HCT116 (cell line): ENCODE measurements at regions of chr11 and their contacts with region 1.

Region 1: DNA sequence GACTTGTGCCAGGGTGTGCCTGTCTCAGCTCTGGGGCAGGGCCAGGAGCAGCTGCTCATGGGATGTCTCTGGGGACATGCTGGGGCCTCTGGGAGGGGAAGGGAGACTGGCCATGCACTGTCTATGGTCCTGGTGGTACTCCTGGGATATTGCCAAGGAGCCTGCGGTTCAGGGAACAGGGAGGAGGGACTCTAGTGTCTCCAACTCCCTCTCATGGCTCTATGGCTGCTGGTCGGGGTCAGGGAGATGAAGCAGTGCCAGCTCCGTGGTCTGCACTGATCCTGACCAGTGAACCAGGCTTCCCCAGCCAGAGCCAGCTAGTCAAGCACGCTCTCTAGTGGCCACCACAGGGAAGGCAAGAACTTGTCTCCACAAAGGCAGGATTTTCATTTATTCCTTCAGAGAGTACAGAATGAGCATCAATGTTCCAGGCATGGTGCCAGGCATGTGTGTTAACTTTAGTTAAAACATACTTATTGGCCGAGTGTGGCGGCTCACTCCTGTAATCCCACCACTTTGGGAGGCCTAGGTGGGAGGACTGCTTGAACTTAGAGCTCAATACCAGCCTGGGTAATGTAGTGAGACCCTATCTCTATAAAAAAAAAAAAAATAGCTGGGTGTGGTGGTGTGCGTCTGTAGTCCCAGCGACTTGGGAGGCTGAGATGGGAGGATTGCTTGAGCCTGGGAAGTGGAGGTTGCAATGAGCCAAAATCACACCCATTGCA is 2.5 kb upstream of the BEST1 start:
- DNase-seq: peak; percentile 62
- ATAC-seq: peak; percentile 91
- H3K4me3 ChIP-seq: no peak overlapping the region
- H3K27ac ChIP-seq: no peak overlapping the region; the same call in 1 of the 2 replicates
- H3K4me1 ChIP-seq: peaks cover 4 to 13% of the 10 kb centered on the region in 2 experiments; a peak in 2 of 4 replicates
- H3K27me3 ChIP-seq: no peaks in the 10 kb centered on the region
- CTCF ChIP-seq: peak; percentile 93 to 96 (median 95)
- POLR2A ChIP-seq: no peak
- RAD21 ChIP-seq: peak; percentile 98

Region 2: DNA sequence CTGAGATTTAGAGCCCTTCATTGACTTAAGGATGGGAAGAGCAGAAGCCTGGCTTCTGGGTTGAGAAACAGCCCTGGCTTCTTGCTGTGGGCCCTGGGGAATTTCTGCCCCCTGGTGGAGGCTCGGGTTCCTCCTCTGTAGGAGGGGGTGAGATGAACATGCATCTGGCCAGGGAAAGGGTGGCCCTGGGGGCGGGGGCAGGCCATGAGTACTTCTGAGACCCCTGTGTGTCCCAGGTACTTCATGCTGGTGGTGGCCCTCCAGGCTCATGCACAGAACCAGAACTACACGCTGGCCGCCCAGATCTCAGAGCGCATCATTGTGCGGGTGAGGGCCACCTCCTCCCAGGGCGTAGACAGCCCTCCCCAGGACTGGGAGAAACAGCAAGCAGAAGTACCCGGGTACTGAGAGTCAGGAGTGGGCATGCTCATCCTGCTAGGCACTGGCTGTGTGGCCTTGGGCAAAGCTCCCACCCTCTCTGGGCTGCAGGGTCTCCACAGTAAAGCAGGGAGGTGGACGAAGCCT is 171.0 kb before region 1 on chr11:
- CTCF ChIA-PET with region 1: no interaction called
- POLR2A ChIA-PET with region 1: no interaction called
- RAD21 ChIA-PET with region 1: no interaction called
- intact Hi-C with region 1: no loop called
- DNase-seq: peak; percentile 28
- ATAC-seq: peak; percentile 84
- H3K4me3 ChIP-seq: no peak overlapping the region
- H3K27ac ChIP-seq: no peak overlapping the region
- H3K4me1 ChIP-seq: peaks cover 10 to 12% of the 10 kb centered on the region in 2 experiments
- H3K27me3 ChIP-seq: no peaks in the 10 kb centered on the region
- CTCF ChIP-seq: peak; percentile 85 to 95 (median 92)
- POLR2A ChIP-seq: no peak
- RAD21 ChIP-seq: peak; percentile 86

Region 3: DNA sequence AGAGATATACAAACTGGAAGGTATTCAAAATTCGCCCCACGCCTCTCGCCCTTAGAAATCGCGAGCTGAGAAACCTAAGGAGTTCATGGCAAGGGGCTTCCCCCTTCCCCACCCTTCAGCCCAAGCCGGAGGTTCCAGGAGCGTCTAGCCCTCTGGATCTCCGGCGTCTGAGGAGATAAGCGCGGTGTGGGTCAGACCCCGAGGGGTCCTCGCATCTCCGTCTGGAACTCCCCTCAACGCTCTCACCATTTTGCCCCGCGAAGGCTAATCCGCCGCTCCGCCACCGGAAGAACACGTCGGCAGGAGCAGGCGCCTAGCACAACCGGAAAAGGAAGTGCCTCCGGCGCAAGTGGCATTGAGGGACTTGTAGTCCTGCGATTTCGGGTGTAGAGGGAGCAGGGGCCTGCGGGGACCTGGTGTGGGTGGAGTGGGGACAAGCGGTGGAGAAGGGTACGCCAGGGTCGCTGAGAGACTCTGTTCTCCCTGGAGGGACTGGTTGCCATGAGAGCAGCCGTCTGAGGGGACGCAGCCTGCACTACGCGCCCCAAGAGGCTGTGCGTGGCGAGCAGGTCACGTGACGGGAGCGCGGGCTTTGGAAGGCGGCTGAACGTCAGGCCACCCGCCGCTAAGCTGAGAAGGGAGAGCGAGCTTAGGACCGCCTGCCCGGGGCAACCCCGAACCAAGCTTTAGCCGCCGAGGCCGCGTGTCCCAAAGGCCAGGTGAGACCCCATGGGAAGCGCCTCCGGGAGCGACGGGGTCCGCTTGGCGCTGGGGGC is 155.2 kb before region 1 on chr11 and contains the starts of genes FEN1 and TMEM258:
- CTCF ChIA-PET with region 1: interaction called, 41 read pairs
- POLR2A ChIA-PET with region 1: interaction called, 5 read pairs
- RAD21 ChIA-PET with region 1: interaction called in 1 of 2 experiments, 7 read pairs
- intact Hi-C with region 1: loop called (anchors 1 kb)
- DNase-seq: peak; percentile 88
- ATAC-seq: peak; percentile 84
- H3K4me3 ChIP-seq: peak within 1 kb of the TSS; percentile 96 to 100
- H3K27ac ChIP-seq: peak within 1 kb of the TSS; percentile 94
- H3K4me1 ChIP-seq: peaks cover 4 to 16% of the 10 kb centered on the region in 2 experiments; a peak in 2 of 4 replicates
- H3K27me3 ChIP-seq: no peaks in the 10 kb centered on the region
- CTCF ChIP-seq: no peak
- POLR2A ChIP-seq: peak; percentile 73
- RAD21 ChIP-seq: no peak
- total RNA-seq, gene FEN1: 89.5 TPM
- total RNA-seq, gene TMEM258: 160 TPM

Region 4: GRCh38 chr11:61899146-61899841 is 48.4 kb before region 1 on chr11:
- CTCF ChIA-PET with region 1: interaction called, 162 read pairs
- POLR2A ChIA-PET with region 1: interaction called, 17 read pairs
- RAD21 ChIA-PET with region 1: interaction called, 9 to 18 read pairs
- intact Hi-C with region 1: loop called (anchors 1 kb)
- DNase-seq: peak; percentile 36
- ATAC-seq: peak; percentile 90
- H3K4me3 ChIP-seq: no peak overlapping the region
- H3K27ac ChIP-seq: no peak overlapping the region
- H3K4me1 ChIP-seq: 0 out of 4 replicates have a peak, but pooled peaks cover 0 to 3% of the 10 kb centered on the region in 2 experiments
- H3K27me3 ChIP-seq: no peaks in the 10 kb centered on the region
- CTCF ChIP-seq: peak; percentile 97 to 100 (median 100)
- POLR2A ChIP-seq: no peak
- RAD21 ChIP-seq: peak; percentile 95

Region 5: GRCh38 chr11:61927501-61927900 is 20.1 kb before region 1 on chr11:
- CTCF ChIA-PET with region 1: interaction called, 19 read pairs
- POLR2A ChIA-PET with region 1: interaction called, 4 read pairs
- RAD21 ChIA-PET with region 1: no interaction called
- intact Hi-C with region 1: no loop called
- DNase-seq: no peak
- ATAC-seq: no peak
- H3K4me3 ChIP-seq: no peak overlapping the region
- H3K27ac ChIP-seq: no peak overlapping the region
- H3K4me1 ChIP-seq: no peaks in the 10 kb centered on the region
- H3K27me3 ChIP-seq: no peaks in the 10 kb centered on the region
- CTCF ChIP-seq: no peak
- POLR2A ChIP-seq: no peak
- RAD21 ChIP-seq: no peak

Region 6: GRCh38 chr11:61967116-61967923 is 19.7 kb after region 1 on chr11 and contains the start of gene FTH1:
- CTCF ChIA-PET with region 1: interaction called, 10 read pairs
- POLR2A ChIA-PET with region 1: interaction called, 60 read pairs
- RAD21 ChIA-PET with region 1: no interaction called
- intact Hi-C with region 1: no loop called
- DNase-seq: peak; percentile 71
- ATAC-seq: peak; percentile 73
- H3K4me3 ChIP-seq: peak within 1 kb of the TSS; percentile 73 to 99
- H3K27ac ChIP-seq: peak within 1 kb of the TSS; percentile 96
- H3K4me1 ChIP-seq: peaks cover 40 to 78% of the 10 kb centered on the region in 2 experiments
- H3K27me3 ChIP-seq: no peaks in the 10 kb centered on the region
- CTCF ChIP-seq: no peak
- POLR2A ChIP-seq: peak; percentile 84
- RAD21 ChIP-seq: no peak
- total RNA-seq, gene FTH1: 3,345 TPM

Region 7: GRCh38 chr11:62081378-62082291 is 134.0 kb after region 1 on chr11:
- CTCF ChIA-PET with region 1: interaction called, 55 read pairs
- POLR2A ChIA-PET with region 1: interaction called, 8 read pairs
- RAD21 ChIA-PET with region 1: interaction called, 7 to 13 read pairs
- intact Hi-C with region 1: loop called (anchors 2 kb)
- DNase-seq: peak; percentile 64
- ATAC-seq: peak; percentile 94
- H3K4me3 ChIP-seq: no peak overlapping the region
- H3K27ac ChIP-seq: no peak overlapping the region
- H3K4me1 ChIP-seq: peaks cover 0 to 9% of the 10 kb centered on the region in 2 experiments; a peak in 2 of 4 replicates
- H3K27me3 ChIP-seq: no peaks in the 10 kb centered on the region
- CTCF ChIP-seq: peak; percentile 76 to 95 (median 93)
- POLR2A ChIP-seq: no peak
- RAD21 ChIP-seq: peak; percentile 99

Region 8: DNA sequence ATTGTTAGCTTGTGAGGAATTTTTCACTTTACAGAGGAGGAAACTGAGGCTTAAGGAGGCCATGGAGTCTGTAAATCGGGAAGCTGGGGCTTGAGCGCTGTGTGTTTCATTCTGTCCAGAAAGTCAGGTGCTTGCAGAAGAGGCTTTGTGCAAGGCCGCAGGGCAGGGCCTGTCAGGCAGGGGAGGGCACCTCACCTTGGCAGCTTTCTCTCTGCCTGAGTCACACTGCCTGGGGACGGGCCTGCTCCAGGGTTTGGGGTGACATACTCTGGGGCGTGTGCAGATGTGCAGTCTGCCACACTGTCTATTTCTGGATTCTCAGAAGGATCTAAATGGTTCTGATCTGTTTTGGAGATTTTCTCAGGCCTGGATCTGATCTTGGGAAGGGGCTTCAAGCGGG is 184.5 kb after region 1 on chr11:
- CTCF ChIA-PET with region 1: no interaction called
- POLR2A ChIA-PET with region 1: no interaction called
- RAD21 ChIA-PET with region 1: no interaction called
- intact Hi-C with region 1: no loop called
- DNase-seq: no peak
- ATAC-seq: no peak
- H3K4me3 ChIP-seq: no peak overlapping the region
- H3K27ac ChIP-seq: no peak overlapping the region
- H3K4me1 ChIP-seq: no peaks in the 10 kb centered on the region
- H3K27me3 ChIP-seq: no peaks in the 10 kb centered on the region
- CTCF ChIP-seq: no peak
- POLR2A ChIP-seq: no peak
- RAD21 ChIP-seq: no peak